Activated CD8-positive, alpha-beta T cell treated with anti-CD3 and anti-CD28 coated beads for 36 hours (primary cell): ENCODE measurements at regions of chr2 and their contacts with region 1.

Region 1: GRCh38 chr2:153953761-153954160 is 82.0 kb downstream of the GALNT13 start:
- DNase-seq: no peak
- ATAC-seq: no peak
- H3K4me3 Mint-ChIP-seq: no peak overlapping the region
- H3K27ac Mint-ChIP-seq: no peak overlapping the region
- H3K4me1 Mint-ChIP-seq: no peaks in the 10 kb centered on the region
- H3K27me3 Mint-ChIP-seq: no peaks in the 10 kb centered on the region
- CTCF ChIP-seq: no peak

Region 2: DNA sequence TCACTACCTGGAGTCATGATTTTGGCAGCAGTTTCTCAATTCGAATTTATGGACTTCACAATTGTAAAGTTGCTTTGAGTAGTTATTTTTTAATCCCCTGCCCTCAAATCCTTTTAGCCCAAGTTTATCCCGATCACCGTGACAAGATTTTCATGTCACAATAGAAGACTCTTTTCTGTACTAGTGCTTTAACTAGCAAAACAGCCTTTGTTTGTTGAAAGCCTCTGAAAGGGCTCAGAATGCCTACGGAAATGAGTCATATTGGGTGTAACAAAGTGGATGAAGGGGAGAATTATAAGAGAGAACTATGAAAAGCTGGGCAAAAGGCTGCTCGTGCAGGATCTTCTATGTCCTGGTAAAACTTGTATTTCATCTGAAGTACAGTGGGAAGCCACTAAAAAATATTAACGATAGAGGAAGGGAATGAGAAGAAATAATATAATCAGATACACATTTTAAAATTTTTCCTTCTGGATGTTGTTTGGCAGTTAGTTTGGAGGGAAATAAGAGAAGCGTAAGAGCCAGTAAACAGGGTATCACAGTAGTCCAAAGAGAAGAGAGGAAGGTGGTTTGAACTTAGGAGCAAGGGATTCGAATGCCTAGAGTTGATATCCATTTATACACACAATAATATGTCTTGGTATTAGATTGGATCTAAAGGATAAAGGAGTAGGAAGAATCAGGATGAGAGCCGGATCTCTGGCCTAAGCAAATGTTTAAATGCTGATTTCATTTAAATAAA is 32.9 kb after region 1 on chr2:
- CTCF ChIA-PET with region 1: no interaction called
- POLR2A ChIA-PET with region 1: no interaction called
- intact Hi-C with region 1: no loop called
- DNase-seq: no peak
- ATAC-seq: no peak
- H3K4me3 Mint-ChIP-seq: no peak overlapping the region
- H3K27ac Mint-ChIP-seq: no peak overlapping the region
- H3K4me1 Mint-ChIP-seq: no peaks in the 10 kb centered on the region
- H3K27me3 Mint-ChIP-seq: no peaks in the 10 kb centered on the region
- CTCF ChIP-seq: no peak

Region 3: GRCh38 chr2:154125891-154126290 is 172.1 kb after region 1 on chr2:
- CTCF ChIA-PET with region 1: no interaction called
- POLR2A ChIA-PET with region 1: no interaction called
- intact Hi-C with region 1: loop called (anchors 10 kb)
- DNase-seq: no peak
- ATAC-seq: no peak
- H3K4me3 Mint-ChIP-seq: no peak overlapping the region
- H3K27ac Mint-ChIP-seq: no peak overlapping the region
- H3K4me1 Mint-ChIP-seq: no peaks in the 10 kb centered on the region
- H3K27me3 Mint-ChIP-seq: no peaks in the 10 kb centered on the region
- CTCF ChIP-seq: no peak